ENCODE measurements at regions of chr5 and their contacts with region 1.

Region 1: DNA sequence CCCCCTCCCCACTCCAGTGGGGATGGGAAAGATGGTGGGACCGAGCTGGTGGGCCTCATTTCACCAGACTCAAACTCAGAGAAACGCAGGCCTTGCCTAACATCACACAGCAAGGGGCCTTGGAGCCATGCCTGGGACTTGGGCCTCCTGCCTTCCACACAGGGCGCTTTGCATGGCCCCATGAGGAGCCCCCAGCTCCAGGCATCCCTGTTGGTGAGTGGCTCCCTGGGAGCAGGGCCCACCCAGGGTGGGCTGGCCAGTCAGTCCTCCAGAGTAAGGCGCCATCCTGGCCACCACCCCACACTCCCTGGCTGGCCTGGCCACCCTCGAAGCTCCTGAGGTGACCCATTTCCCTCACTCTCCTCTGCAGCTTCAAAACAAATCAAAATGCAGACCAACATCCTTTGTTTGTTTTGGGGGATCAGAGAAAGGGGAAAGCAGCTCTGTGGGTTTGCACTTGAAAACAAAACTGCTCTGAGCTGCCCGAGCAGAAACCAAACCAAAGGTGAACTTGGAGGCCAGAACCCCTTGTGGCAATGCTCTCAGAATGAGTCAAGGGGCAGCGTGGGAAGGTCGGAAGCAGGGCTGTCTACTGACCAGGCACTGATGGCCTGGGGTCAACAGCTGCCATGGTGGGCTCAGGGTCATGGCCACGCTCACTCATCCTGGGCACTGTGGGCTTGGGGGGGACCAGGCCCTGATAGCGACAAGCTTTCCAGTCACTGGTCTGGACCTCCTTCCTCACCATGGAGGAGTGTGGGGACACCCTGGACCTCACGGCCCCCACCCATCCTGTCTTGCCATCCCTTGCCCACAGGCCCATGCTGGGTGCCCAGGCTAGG is 37.0 kb upstream of the VDAC1 start:
- DNase-seq: no peak
- H3K4me3 ChIP-seq: no peak overlapping the region
- H3K27ac ChIP-seq: no peak overlapping the region
- H3K4me1 ChIP-seq: no peaks in the 10 kb centered on the region
- H3K27me3 ChIP-seq: no peaks in the 10 kb centered on the region
- CTCF ChIP-seq: no peak
- POLR2A ChIP-seq: no peak

Region 2: GRCh38 chr5:133977161-133977787 is 64.5 kb before region 1 on chr5:
- CTCF ChIA-PET with region 1: interaction called, 11 read pairs
- POLR2A ChIA-PET with region 1: no interaction called
- dilution Hi-C with region 1: no loop called
- intact Hi-C with region 1: no loop called
- DNase-seq: no peak
- H3K4me3 ChIP-seq: no peak overlapping the region
- H3K27ac ChIP-seq: peak overlapping the region; percentile 41
- H3K4me1 ChIP-seq: no peaks in the 10 kb centered on the region
- H3K27me3 ChIP-seq: no peaks in the 10 kb centered on the region
- CTCF ChIP-seq: no peak
- POLR2A ChIP-seq: no peak

Region 3: GRCh38 chr5:134018154-134018985 is 23.4 kb before region 1 on chr5:
- CTCF ChIA-PET with region 1: interaction called, 21 read pairs
- POLR2A ChIA-PET with region 1: no interaction called
- dilution Hi-C with region 1: no loop called
- intact Hi-C with region 1: no loop called
- DNase-seq: no peak
- H3K4me3 ChIP-seq: no peak overlapping the region
- H3K27ac ChIP-seq: no peak overlapping the region
- H3K4me1 ChIP-seq: no peaks in the 10 kb centered on the region
- H3K27me3 ChIP-seq: peaks cover 0 to 3% of the 10 kb centered on the region in 2 experiments
- CTCF ChIP-seq: no peak
- POLR2A ChIP-seq: no peak

Region 4: GRCh38 chr5:134063188-134063820 is 21.5 kb after region 1 on chr5:
- CTCF ChIA-PET with region 1: interaction called, 42 read pairs
- POLR2A ChIA-PET with region 1: no interaction called
- dilution Hi-C with region 1: no loop called
- intact Hi-C with region 1: no loop called
- DNase-seq: no peak
- H3K4me3 ChIP-seq: no peak overlapping the region
- H3K27ac ChIP-seq: no peak overlapping the region
- H3K4me1 ChIP-seq: no peaks in the 10 kb centered on the region
- H3K27me3 ChIP-seq: peaks cover 1 to 4% of the 10 kb centered on the region in 2 experiments
- CTCF ChIP-seq: no peak
- POLR2A ChIP-seq: no peak

Region 5: GRCh38 chr5:134090522-134090921 is 48.7 kb after region 1 on chr5:
- CTCF ChIA-PET with region 1: interaction called, 14 read pairs
- POLR2A ChIA-PET with region 1: no interaction called
- dilution Hi-C with region 1: no loop called
- intact Hi-C with region 1: no loop called
- DNase-seq: no peak
- H3K4me3 ChIP-seq: no peak overlapping the region
- H3K27ac ChIP-seq: no peak overlapping the region
- H3K4me1 ChIP-seq: no peaks in the 10 kb centered on the region
- H3K27me3 ChIP-seq: peaks cover 8 to 10% of the 10 kb centered on the region in 2 experiments
- CTCF ChIP-seq: no peak
- POLR2A ChIP-seq: no peak

Region 6: DNA sequence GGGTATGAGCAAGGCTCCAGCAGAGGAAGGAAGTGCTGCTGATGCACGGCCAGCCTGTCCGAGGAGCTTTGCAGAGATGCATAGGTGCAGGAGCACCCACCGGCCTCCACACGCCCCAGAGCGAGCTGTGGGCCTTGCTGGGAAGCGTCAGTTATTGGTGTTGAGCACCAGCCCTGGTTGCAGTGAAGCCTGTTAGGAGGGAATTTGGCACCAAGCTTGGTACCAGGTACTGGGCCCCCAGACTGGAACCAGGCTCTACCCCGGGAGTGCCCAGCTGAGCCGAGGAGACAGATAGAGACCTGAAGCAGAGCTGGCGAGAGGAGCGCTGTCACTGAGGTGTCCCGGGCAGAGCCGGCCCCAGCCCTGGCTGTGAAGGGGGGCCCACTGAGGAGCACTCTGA is 77.9 kb after region 1 on chr5:
- CTCF ChIA-PET with region 1: interaction called, 43 read pairs
- POLR2A ChIA-PET with region 1: no interaction called
- dilution Hi-C with region 1: no loop called
- intact Hi-C with region 1: no loop called
- DNase-seq: no peak
- H3K4me3 ChIP-seq: no peak overlapping the region
- H3K27ac ChIP-seq: no peak overlapping the region
- H3K4me1 ChIP-seq: peaks cover 2% of the 10 kb centered on the region
- H3K27me3 ChIP-seq: no peaks in the 10 kb centered on the region
- CTCF ChIP-seq: no peak
- POLR2A ChIP-seq: no peak

Region 7: DNA sequence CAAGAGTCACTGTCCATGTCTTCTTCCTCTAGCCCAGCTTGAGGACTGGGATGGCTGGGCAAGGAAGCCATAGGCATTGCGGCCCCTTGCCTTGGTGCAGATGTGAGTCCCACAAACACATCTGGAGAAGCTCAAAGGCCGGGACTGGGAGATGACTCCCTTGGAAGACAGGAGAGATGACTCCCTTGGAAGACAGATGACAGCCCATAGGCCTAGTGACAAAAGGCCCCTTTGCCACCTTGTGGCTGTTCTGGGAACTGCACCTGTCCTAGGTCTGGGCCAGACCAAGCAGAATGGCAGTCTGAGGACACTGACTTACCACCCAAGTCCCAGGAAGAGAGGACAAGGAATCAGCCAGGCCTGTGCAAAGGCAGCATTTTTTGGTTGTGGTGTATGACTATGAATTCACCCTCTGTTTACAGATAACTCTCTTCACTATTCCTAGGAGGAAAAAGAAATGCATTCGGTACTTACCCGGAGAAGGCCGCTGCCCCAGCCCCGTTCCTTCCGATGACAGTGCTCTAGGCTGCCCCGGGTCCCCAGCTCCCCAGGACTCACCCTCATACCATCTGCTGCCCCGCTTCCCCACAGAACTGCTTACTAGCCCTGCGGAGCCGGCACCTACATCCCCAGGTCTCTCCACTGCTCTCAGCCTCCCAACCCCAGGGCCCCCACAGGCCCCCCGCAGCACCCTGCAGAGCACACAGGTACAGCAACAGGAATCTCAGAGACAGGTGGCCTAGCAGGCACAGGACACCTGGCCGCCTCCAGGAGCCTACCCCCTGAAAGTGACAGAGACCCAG is 104.2 kb after region 1 on chr5:
- CTCF ChIA-PET with region 1: interaction called, 517 read pairs
- POLR2A ChIA-PET with region 1: interaction called, 3 read pairs
- dilution Hi-C with region 1: no loop called
- intact Hi-C with region 1: loop called (anchors 1 kb)
- DNase-seq: peak; percentile 69
- H3K4me3 ChIP-seq: no peak overlapping the region
- H3K27ac ChIP-seq: no peak overlapping the region
- H3K4me1 ChIP-seq: no peaks in the 10 kb centered on the region
- H3K27me3 ChIP-seq: no peaks in the 10 kb centered on the region
- CTCF ChIP-seq: peak; percentile 83 to 93
- POLR2A ChIP-seq: no peak

Measured in endothelial cell of umbilical vein (primary cell).